ENCODE measurements at regions of chr11 and their contacts with region 1.

Region 1: DNA sequence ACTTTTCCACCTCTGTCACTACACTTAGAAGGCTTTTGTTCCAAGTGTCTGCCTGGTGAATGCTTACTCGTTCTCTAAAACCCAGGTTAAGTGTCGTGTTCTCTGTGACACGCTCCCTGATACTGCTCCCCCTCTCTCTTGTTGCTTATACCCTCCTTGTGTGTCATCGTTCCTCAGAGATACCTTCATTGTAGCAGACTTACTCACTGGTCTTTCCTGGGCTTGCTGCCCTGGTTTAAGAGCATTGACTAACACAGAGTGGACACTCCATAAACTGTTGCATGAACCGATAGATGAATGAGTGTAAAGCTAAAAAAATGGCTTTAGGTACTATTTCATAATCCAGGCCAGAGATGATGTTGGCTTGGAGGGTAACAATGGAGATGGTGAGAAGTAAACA is 171.3 kb downstream of the GRIK4 start:
- DNase-seq: no peak
- ATAC-seq: no peak
- H3K4me3 ChIP-seq: no peak overlapping the region
- H3K4me3 Mint-ChIP-seq: no peak overlapping the region
- H3K27ac ChIP-seq: no peak overlapping the region
- H3K27ac Mint-ChIP-seq: no peak overlapping the region
- H3K4me1 ChIP-seq: no peaks in the 10 kb centered on the region
- H3K4me1 Mint-ChIP-seq: no peaks in the 10 kb centered on the region
- H3K27me3 ChIP-seq: no peaks in the 10 kb centered on the region
- H3K27me3 Mint-ChIP-seq: peaks cover 25% of the 10 kb centered on the region
- CTCF ChIP-seq: no peak

Region 2: GRCh38 chr11:120511116-120511819 is 171.6 kb before region 1 on chr11 and contains the start of gene GRIK4:
- CTCF ChIA-PET with region 1: no interaction called
- POLR2A ChIA-PET with region 1: no interaction called
- intact Hi-C with region 1: loop called in 1 of 2 experiments (anchors 2 kb)
- DNase-seq: peak; percentile 47 to 81 (median 73)
- ATAC-seq: peak; percentile 73
- H3K4me3 ChIP-seq: no peak within 1 kb of the TSS
- H3K4me3 Mint-ChIP-seq: peak within 1 kb of the TSS; percentile 62
- H3K27ac ChIP-seq: no peak within 1 kb of the TSS
- H3K27ac Mint-ChIP-seq: no peak within 1 kb of the TSS
- H3K4me1 ChIP-seq: no peaks in the 10 kb centered on the region
- H3K4me1 Mint-ChIP-seq: peaks cover 5% of the 10 kb centered on the region
- H3K27me3 ChIP-seq: peaks cover 6% of the 10 kb centered on the region in 2 experiments
- H3K27me3 Mint-ChIP-seq: peaks cover 74% of the 10 kb centered on the region
- CTCF ChIP-seq: peak; percentile 71
- total RNA-seq, gene GRIK4: not detected

Region 3: DNA sequence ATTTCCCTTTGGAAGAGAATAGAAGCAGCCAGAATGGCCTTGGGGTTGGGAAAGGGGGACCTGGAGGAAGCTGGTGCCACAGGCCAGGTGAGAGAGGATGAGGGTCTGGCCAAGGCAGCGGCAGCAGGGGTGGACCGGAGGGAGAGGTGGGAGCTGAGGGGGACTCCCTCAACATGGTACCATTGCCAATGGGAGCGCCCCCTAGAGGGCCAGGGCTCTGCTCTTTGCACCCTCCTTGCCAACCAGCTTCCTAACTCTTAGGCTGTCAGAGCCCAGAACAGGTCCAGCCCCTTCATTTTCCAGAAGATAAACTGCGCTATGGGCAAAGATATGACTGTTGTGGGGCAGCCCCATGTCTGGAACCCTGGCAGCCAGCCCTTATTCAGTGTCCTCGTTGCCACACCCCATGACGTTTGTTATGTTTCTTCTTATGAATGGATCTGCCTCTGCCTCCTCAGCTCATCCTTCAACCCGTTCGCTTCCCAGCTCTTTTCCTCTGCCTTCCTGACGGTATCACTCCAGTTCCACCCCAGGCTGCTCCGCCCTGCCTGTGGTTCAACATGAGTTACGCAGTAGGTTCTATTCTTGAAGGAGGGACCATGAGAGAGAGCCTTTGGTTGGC is 13.8 kb after region 1 on chr11:
- CTCF ChIA-PET with region 1: interaction called, 14 read pairs
- POLR2A ChIA-PET with region 1: no interaction called
- intact Hi-C with region 1: no loop called
- DNase-seq: no peak
- ATAC-seq: no peak
- H3K4me3 ChIP-seq: no peak overlapping the region
- H3K4me3 Mint-ChIP-seq: no peak overlapping the region
- H3K27ac ChIP-seq: no peak overlapping the region
- H3K27ac Mint-ChIP-seq: no peak overlapping the region
- H3K4me1 ChIP-seq: no peaks in the 10 kb centered on the region
- H3K4me1 Mint-ChIP-seq: no peaks in the 10 kb centered on the region
- H3K27me3 ChIP-seq: no peaks in the 10 kb centered on the region
- H3K27me3 Mint-ChIP-seq: peaks cover 13% of the 10 kb centered on the region
- CTCF ChIP-seq: no peak

Region 4: GRCh38 chr11:120775986-120776951 is 93.4 kb after region 1 on chr11:
- CTCF ChIA-PET with region 1: no interaction called
- POLR2A ChIA-PET with region 1: no interaction called
- intact Hi-C with region 1: no loop called
- DNase-seq: no peak
- ATAC-seq: no peak
- H3K4me3 ChIP-seq: no peak overlapping the region
- H3K4me3 Mint-ChIP-seq: no peak overlapping the region
- H3K27ac ChIP-seq: no peak overlapping the region
- H3K27ac Mint-ChIP-seq: no peak overlapping the region
- H3K4me1 ChIP-seq: no peaks in the 10 kb centered on the region
- H3K4me1 Mint-ChIP-seq: no peaks in the 10 kb centered on the region
- H3K27me3 ChIP-seq: no peaks in the 10 kb centered on the region
- H3K27me3 Mint-ChIP-seq: peaks cover 13% of the 10 kb centered on the region
- CTCF ChIP-seq: no peak

Measured in CD8-positive, alpha-beta T cell (primary cell).